CD8-positive, alpha-beta T cell (primary cell): ENCODE measurements at regions of chr2 and their contacts with region 1.

Region 1: GRCh38 chr2:234288974-234289455 is 207.9 kb downstream of the ARL4C start:
- DNase-seq: peak; percentile 52 to 87 (median 73)
- ATAC-seq: no peak
- H3K4me3 ChIP-seq: no peak overlapping the region
- H3K4me3 Mint-ChIP-seq: peak overlapping the region; percentile 9
- H3K27ac ChIP-seq: peak overlapping the region; percentile 94 to 99
- H3K27ac Mint-ChIP-seq: peak overlapping the region; percentile 98
- H3K4me1 ChIP-seq: peaks cover 56% of the 10 kb centered on the region
- H3K4me1 Mint-ChIP-seq: peaks cover 66% of the 10 kb centered on the region
- H3K27me3 ChIP-seq: no peaks in the 10 kb centered on the region
- H3K27me3 Mint-ChIP-seq: no peaks in the 10 kb centered on the region
- CTCF ChIP-seq: peak; percentile 77

Region 2: DNA sequence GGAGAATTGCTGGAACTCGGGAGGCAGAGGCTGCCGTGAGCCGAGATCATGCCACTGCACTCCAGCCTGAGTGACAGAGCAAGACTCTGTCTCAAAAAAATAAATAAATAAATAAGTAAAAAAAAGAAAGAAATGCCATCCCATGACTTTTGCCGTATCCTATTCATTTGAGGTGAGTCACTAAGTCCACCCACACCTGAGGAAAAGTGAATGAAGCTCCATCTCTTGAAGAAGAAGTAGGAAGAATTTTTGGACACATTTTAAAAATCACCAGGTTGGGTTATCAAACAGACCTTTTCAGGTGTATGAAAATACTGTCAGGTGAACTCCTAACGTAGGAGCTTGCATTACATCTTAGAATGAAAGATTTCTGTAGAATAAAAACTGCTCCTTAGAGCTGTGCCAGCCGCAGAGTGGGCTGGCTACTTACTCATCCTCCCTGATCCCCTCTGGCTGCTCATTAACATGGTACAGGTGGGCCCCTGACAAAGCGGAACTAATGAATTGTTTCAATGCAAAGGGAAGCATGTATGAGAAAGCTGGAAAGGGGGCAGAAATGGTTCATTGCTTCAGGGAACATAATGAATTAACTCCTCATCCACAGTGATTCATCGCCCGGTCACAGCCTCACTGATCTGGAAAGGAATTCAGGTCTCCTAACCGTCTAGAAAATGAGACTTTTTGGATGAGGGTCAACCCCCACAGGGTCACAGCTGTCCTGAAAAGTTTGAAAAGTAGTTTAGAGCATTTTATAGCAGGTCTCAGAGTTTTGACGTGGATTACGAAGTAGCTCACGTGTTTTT is 47.2 kb before region 1 on chr2:
- CTCF ChIA-PET with region 1: interaction called, 10 read pairs
- POLR2A ChIA-PET with region 1: no interaction called
- intact Hi-C with region 1: no loop called
- DNase-seq: no peak
- ATAC-seq: no peak
- H3K4me3 ChIP-seq: no peak overlapping the region
- H3K4me3 Mint-ChIP-seq: no peak overlapping the region
- H3K27ac ChIP-seq: no peak overlapping the region
- H3K27ac Mint-ChIP-seq: no peak overlapping the region
- H3K4me1 ChIP-seq: no peaks in the 10 kb centered on the region
- H3K4me1 Mint-ChIP-seq: peaks cover 9% of the 10 kb centered on the region
- H3K27me3 ChIP-seq: no peaks in the 10 kb centered on the region
- H3K27me3 Mint-ChIP-seq: no peaks in the 10 kb centered on the region
- CTCF ChIP-seq: no peak

Region 3: DNA sequence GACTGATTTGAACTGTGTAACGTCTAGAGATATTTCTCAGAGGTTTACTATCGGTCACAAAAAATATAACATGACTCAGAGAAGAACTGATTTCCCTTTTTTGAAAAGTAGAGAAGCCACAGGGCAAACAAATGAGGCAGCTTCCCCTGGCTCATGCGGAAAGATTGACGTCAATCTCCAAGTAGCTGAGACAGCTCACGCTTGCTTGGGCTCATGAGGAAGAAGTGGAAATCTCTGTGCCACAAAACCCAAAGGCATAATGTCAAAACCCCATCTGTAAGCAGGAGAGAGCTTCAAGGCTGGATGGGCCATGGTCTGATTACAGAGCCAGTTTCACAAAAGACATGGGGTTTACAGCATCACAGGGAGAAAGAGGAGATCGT is 19.8 kb after region 1 on chr2:
- CTCF ChIA-PET with region 1: interaction called, 9 read pairs
- POLR2A ChIA-PET with region 1: interaction called, 16 read pairs
- intact Hi-C with region 1: loop called (anchors 1 kb)
- DNase-seq: peak; percentile 37 to 88 (median 60)
- ATAC-seq: peak; percentile 83
- H3K4me3 ChIP-seq: no peak overlapping the region
- H3K4me3 Mint-ChIP-seq: peak overlapping the region; percentile 45
- H3K27ac ChIP-seq: peak overlapping the region; percentile 12 to 48
- H3K27ac Mint-ChIP-seq: peak overlapping the region; percentile 93
- H3K4me1 ChIP-seq: peaks cover 21% of the 10 kb centered on the region
- H3K4me1 Mint-ChIP-seq: peaks cover 40% of the 10 kb centered on the region
- H3K27me3 ChIP-seq: no peaks in the 10 kb centered on the region
- H3K27me3 Mint-ChIP-seq: no peaks in the 10 kb centered on the region
- CTCF ChIP-seq: no peak

Region 4: DNA sequence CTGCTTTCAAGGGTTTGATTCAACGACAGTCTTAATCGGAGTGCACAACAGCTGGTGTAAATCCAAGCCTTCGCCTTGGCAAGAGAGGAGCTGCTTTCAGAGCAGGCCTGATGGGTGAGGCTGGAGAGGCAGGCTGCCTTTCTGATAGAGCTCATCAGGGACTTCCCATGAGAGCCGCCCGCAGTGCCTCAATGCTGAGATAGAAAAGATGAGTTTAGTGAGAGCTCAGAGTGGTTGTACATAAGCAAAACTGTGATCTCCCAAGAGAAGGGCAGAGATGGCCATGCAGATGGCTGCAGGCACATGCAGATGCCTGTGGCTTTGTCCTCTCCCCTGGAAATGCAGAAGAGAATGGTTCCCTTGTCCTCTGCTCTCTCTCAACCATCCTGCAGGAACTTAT is 85.7 kb after region 1 on chr2:
- CTCF ChIA-PET with region 1: interaction called, 16 read pairs
- POLR2A ChIA-PET with region 1: interaction called, 5 read pairs
- intact Hi-C with region 1: loop called (anchors 2 to 5 kb)
- DNase-seq: no peak
- ATAC-seq: no peak
- H3K4me3 ChIP-seq: no peak overlapping the region
- H3K4me3 Mint-ChIP-seq: no peak overlapping the region
- H3K27ac ChIP-seq: no peak overlapping the region
- H3K27ac Mint-ChIP-seq: no peak overlapping the region
- H3K4me1 ChIP-seq: peaks cover 42% of the 10 kb centered on the region
- H3K4me1 Mint-ChIP-seq: peaks cover 51% of the 10 kb centered on the region
- H3K27me3 ChIP-seq: no peaks in the 10 kb centered on the region
- H3K27me3 Mint-ChIP-seq: no peaks in the 10 kb centered on the region
- CTCF ChIP-seq: no peak

Region 5: DNA sequence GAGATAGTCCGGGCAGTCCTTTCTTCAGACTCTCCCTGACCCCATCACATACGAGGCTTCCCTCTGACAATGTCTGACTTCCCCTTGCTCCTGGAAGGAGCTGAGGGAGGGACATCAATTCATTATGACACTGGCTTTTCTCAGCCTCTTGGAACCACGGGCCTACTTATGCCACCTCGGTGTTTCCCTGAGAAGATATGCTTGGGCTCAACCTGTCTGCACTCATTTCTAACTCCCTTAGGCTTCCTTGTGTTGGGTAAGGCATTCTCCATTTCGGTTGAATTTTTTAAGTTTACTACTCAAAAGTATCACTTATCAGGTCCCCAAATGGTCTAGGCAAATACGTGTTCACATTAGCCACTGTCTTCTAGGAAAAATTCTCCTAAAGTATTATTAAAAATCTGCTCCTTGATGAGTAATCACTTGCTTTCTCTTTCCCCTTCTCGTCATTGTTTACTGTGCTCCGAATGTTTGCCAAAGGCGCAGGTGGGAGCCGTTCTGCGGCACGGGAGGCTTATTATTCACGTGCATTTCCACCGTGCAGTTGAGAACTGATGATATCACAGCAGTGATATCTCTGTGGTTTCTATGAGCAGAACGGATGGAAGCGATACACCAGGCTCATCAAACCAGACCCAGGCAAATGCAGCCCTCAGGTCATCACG is 174.7 kb after region 1 on chr2:
- CTCF ChIA-PET with region 1: interaction called, 18 read pairs
- POLR2A ChIA-PET with region 1: interaction called, 7 read pairs
- intact Hi-C with region 1: no loop called
- DNase-seq: peak; percentile 58 to 92 (median 75)
- ATAC-seq: peak; percentile 87
- H3K4me3 ChIP-seq: peak overlapping the region; percentile 9 to 36
- H3K4me3 Mint-ChIP-seq: peak overlapping the region; percentile 50
- H3K27ac ChIP-seq: peak overlapping the region; percentile 85 to 94
- H3K27ac Mint-ChIP-seq: peak overlapping the region; percentile 94
- H3K4me1 ChIP-seq: peaks cover 63% of the 10 kb centered on the region
- H3K4me1 Mint-ChIP-seq: peaks cover 67% of the 10 kb centered on the region
- H3K27me3 ChIP-seq: no peaks in the 10 kb centered on the region
- H3K27me3 Mint-ChIP-seq: no peaks in the 10 kb centered on the region
- CTCF ChIP-seq: no peak